Activated CD4-positive, alpha-beta memory T cell treated with anti-CD3 and anti-CD28 coated beads for 36 hours (primary cell): ENCODE measurements at regions of chr16 and their contacts with region 1.

Region 1: GRCh38 chr16:17590719-17591654 is 120.2 kb upstream of the XYLT1 start:
- DNase-seq: peak; percentile 79
- H3K4me3 Mint-ChIP-seq: no peak overlapping the region
- H3K27ac Mint-ChIP-seq: peak overlapping the region; percentile 87
- H3K4me1 Mint-ChIP-seq: peaks cover 8% of the 10 kb centered on the region
- H3K27me3 Mint-ChIP-seq: peaks cover 16% of the 10 kb centered on the region

Region 2: DNA sequence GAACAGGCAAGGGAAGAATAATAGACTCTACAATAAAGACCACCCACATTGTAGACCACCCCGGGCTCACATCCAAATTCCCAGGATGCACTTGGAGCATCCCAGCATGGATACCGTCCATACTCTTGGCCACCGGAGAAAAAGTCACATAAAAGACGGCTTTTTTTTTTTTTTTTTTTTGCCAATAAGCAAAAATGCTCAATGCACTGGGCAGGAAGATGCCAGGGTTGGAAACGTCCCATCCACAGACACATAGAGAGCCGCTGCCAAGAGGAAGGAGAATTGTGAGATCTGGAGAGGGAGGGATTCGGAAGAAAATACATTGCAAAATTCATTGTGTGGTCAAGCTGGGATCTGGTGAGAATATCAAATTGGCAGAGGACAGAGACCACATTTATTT is 407.0 kb before region 1 on chr16:
- CTCF ChIA-PET with region 1: no interaction called
- POLR2A ChIA-PET with region 1: no interaction called
- intact Hi-C with region 1: no loop called
- DNase-seq: no peak
- H3K4me3 Mint-ChIP-seq: no peak overlapping the region
- H3K27ac Mint-ChIP-seq: no peak overlapping the region
- H3K4me1 Mint-ChIP-seq: no peaks in the 10 kb centered on the region
- H3K27me3 Mint-ChIP-seq: no peaks in the 10 kb centered on the region

Region 3: DNA sequence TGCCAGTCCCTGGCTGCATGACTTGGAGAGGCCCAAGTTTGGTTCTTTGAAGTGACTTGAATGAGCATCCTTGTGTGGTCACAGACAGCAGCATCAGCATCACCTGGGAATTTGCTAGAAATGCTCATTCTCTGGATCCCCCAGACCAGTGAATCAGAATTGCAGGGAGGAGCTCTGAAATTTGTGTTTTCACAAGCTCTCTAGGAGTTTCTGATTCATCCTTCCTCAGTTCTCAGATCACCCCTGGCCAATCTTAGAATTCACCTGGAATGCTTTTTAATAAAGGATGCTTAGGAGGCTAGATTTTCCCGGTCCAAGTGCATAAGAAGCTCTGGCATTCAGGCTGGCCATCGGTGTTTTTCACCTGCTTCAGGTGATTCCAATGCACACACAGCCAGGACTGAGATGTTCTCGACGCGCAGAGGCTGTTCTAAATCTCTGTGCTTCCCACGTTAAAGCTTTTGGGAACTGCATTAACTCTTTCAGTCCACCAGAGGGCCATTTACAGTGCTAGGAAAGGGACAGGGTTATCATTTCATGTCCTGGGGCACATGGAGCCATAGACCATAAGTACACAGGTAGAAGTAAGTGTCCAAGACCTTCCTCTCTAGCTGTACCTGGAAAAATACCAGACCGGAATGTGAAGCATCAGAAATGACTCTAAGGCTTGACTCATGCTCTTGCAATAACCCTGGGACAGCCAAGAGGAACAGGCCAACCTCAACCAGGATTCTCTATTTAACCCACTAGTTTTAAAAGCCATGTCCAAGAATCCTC is 34.5 kb before region 1 on chr16:
- CTCF ChIA-PET with region 1: no interaction called
- POLR2A ChIA-PET with region 1: no interaction called
- intact Hi-C with region 1: loop called (anchors 5 kb)
- DNase-seq: no peak
- H3K4me3 Mint-ChIP-seq: no peak overlapping the region
- H3K27ac Mint-ChIP-seq: peak overlapping the region; percentile 13
- H3K4me1 Mint-ChIP-seq: peaks cover 5% of the 10 kb centered on the region
- H3K27me3 Mint-ChIP-seq: peaks cover 16% of the 10 kb centered on the region

Region 4: DNA sequence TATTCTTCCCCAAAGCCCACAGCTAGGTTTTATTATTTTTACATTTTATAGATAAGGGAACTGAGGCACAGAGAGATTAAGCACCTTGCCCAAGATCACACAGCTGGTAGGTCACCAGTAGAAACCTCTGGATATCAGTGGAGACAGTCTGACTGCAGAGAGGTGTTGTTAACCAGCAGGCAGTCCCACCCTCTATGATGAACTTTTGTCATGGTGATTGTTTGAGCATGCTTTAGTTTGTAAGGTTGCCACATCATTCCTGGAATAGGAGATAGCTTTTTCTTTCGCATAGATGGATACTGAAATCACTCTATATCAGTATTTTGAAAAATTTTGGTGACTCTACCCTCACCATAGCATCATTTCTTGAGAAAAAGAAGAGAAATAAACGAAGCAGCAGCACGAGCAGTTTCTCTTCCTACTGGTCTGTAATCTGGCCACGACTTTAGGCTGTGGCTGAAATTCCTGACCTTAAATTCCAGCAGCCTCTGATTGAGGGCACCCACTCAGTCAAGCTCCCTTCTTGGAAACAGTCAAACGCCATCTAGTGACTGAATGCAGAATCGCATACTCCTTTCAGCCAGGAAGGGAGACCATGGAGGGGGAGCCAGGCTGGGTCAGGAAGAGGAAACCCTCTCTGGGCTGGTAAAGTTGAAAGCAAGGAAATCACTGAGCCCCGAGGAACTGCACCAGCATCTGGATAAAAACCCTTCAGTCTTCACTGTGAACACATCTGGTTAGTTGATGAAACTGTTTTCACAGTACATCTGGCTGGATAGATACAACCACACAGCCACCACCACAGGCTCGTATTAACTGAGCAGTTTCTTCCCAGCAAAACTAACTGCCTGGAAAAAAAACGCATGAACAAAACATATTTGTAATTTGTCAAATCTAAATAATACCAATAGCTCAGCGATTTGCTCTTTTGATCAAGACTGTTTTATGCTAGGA is 11.8 kb before region 1 on chr16:
- CTCF ChIA-PET with region 1: interaction called, 21 read pairs
- POLR2A ChIA-PET with region 1: no interaction called
- intact Hi-C with region 1: no loop called
- DNase-seq: peak; percentile 60
- H3K4me3 Mint-ChIP-seq: no peak overlapping the region
- H3K27ac Mint-ChIP-seq: no peak overlapping the region
- H3K4me1 Mint-ChIP-seq: peaks cover 3% of the 10 kb centered on the region
- H3K27me3 Mint-ChIP-seq: peaks cover 6% of the 10 kb centered on the region